Common myeloid progenitor, CD34-positive (primary cell): ENCODE measurements at regions of chr10 and their contacts with region 1.

Region 1: DNA sequence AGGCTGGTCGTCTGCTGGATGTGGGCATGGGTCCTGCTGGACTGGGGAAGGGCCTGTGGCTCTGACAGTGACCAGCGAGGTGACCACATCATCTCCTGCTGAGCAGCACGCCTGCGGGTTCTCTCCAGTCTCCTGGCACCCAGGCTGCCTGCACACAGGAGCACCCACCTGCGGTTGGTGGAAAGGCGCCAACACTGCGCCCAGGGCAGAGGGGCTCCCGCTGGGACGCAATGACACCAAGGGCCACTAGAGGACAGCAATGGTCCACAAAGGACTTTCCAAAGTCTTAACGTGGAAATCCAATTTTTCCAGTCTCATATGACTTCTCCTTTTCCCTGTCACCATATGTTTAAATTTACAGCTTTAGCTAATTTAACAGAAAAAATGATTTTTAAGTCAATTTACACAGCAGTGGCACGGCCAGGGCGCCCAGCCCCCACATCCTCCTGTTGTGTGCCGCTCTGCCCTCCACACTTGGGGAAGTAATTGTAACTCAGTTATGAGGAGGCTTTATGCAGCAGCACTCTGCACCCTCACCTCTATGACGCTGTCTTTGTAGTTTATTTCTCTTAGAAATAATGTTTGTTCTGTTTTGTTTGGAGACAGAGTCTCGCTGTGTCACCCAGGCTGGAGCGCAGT is 38.1 kb downstream of the CFAP46 start:
- DNase-seq: peak; percentile 56 to 64 (median 60)
- H3K4me3 ChIP-seq: no peak overlapping the region
- H3K27ac ChIP-seq: no peak overlapping the region
- H3K4me1 ChIP-seq: peaks cover 0 to 14% (median 6%) of the 10 kb centered on the region in 4 experiments
- H3K27me3 ChIP-seq: peaks cover 0 to 9% (median 2%) of the 10 kb centered on the region in 5 experiments

Region 2: GRCh38 chr10:132204781-132205473 is 699.4 kb before region 1 on chr10:
- CTCF ChIA-PET with region 1: no interaction called
- POLR2A ChIA-PET with region 1: no interaction called
- DNase-seq: no peak
- H3K4me3 ChIP-seq: no peak overlapping the region
- H3K27ac ChIP-seq: no peak overlapping the region
- H3K4me1 ChIP-seq: peaks cover 0 to 6% (median 2%) of the 10 kb centered on the region in 4 experiments
- H3K27me3 ChIP-seq: no peaks in the 10 kb centered on the region

Region 3: GRCh38 chr10:132892004-132892403 is 12.3 kb before region 1 on chr10:
- CTCF ChIA-PET with region 1: interaction called, 12 read pairs
- POLR2A ChIA-PET with region 1: no interaction called
- DNase-seq: no peak
- H3K4me3 ChIP-seq: no peak overlapping the region
- H3K27ac ChIP-seq: no peak overlapping the region
- H3K4me1 ChIP-seq: no peaks in the 10 kb centered on the region
- H3K27me3 ChIP-seq: peaks cover 0 to 30% (median 4%) of the 10 kb centered on the region in 5 experiments

Region 4: GRCh38 chr10:132939957-132940790 is 35.9 kb after region 1 on chr10:
- CTCF ChIA-PET with region 1: interaction called, 15 read pairs
- POLR2A ChIA-PET with region 1: no interaction called
- DNase-seq: peak; percentile 61 to 79 (median 77)
- H3K4me3 ChIP-seq: no peak overlapping the region
- H3K27ac ChIP-seq: no peak overlapping the region
- H3K4me1 ChIP-seq: peaks cover 0 to 17% (median 6%) of the 10 kb centered on the region in 4 experiments
- H3K27me3 ChIP-seq: peaks cover 0 to 71% (median 26%) of the 10 kb centered on the region in 5 experiments

Region 5: DNA sequence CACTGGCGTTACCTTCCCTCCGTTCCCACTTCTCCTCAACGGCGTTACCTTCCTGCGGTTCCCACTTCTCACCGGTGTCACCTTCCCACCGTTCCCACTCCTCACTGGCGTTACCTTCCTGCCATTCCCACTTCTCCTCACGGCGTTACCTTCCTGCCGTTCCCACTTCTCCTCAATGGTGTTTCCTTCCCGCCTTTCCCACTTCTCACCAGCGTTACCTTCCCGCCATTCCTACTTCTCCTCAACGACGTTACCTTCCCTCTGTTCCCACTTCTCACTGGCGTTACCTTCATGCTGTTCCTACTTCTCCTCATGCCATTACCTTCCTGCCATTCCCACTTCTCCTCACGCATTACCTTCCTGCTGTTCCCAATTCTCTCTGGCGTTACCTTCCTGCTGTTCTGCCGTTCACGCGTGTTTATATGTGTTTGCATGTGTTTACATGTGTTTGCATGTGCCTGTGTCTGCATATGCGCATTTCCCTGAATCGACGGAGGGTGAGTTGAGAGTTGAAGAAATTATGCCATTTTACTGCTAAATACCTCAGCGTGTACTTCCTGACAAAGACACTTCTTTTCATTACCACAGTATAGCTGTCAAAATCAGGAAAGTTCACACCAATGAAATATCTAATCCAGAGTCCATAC is 61.2 kb after region 1 on chr10:
- CTCF ChIA-PET with region 1: no interaction called
- POLR2A ChIA-PET with region 1: no interaction called
- DNase-seq: peak in 2 of 3 donors; percentile 20 to 33
- H3K4me3 ChIP-seq: no peak overlapping the region
- H3K27ac ChIP-seq: no peak overlapping the region
- H3K4me1 ChIP-seq: peaks cover 0 to 10% (median 4%) of the 10 kb centered on the region in 4 experiments
- H3K27me3 ChIP-seq: peaks cover 0 to 23% (median 14%) of the 10 kb centered on the region in 5 experiments

Region 6: GRCh38 chr10:133022776-133023100 is 118.4 kb after region 1 on chr10:
- CTCF ChIA-PET with region 1: no interaction called
- POLR2A ChIA-PET with region 1: no interaction called
- DNase-seq: peak in 2 of 3 donors; percentile 17 to 19
- H3K4me3 ChIP-seq: no peak overlapping the region
- H3K27ac ChIP-seq: no peak overlapping the region
- H3K4me1 ChIP-seq: peaks cover 0 to 13% (median 6%) of the 10 kb centered on the region in 4 experiments
- H3K27me3 ChIP-seq: peaks cover 0 to 37% (median 5%) of the 10 kb centered on the region in 5 experiments

Region 7: DNA sequence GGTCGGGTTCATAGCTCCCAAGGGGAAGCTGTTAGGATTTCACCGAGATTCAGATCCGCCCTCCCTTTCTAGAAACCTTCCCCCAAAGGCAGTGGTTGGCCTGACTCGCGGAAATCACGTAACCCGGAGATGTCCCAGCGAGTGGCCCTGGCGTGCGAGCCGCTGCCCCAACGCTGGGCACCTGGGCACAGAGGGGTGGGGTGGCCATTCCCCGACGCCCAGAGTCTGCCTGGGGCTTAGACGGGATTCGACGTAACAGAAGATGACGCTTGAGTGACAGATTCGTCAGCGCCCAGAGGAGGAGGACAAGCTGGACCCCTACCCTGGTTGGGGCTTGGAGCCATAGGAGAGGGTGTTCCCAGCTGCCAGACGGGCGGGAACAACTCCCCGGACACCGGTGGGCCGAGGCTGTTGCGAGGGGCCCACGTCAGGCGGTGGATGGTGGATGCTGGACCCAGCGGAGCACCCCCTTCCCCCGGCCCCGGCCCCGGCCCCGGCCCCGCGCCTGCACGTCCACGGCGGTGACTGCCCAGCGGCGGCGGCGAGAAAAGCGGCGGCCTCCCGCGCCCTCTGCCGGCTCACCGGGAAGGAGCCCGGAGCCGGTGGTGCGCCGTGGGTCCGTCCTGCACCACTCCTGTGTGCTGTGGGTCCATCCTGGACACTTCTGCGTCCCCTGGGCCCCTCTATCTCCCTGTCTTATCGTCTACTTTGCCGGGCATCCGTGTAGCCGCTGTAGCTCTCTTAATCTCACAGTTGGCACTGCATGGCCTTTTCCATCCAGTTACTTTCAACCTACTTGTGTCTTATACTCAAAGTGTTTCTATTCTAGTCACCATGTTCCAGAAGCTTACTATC is 220.3 kb after region 1 on chr10:
- CTCF ChIA-PET with region 1: interaction called, 15 read pairs
- POLR2A ChIA-PET with region 1: no interaction called
- DNase-seq: peak in 2 of 3 donors; percentile 31 to 38
- H3K4me3 ChIP-seq: no peak overlapping the region
- H3K27ac ChIP-seq: no peak overlapping the region
- H3K4me1 ChIP-seq: peaks cover 0 to 19% (median 16%) of the 10 kb centered on the region in 4 experiments
- H3K27me3 ChIP-seq: peaks cover 0 to 57% (median 9%) of the 10 kb centered on the region in 5 experiments